ENCODE measurements at regions of chr10 and their contacts with region 1.

Region 1: DNA sequence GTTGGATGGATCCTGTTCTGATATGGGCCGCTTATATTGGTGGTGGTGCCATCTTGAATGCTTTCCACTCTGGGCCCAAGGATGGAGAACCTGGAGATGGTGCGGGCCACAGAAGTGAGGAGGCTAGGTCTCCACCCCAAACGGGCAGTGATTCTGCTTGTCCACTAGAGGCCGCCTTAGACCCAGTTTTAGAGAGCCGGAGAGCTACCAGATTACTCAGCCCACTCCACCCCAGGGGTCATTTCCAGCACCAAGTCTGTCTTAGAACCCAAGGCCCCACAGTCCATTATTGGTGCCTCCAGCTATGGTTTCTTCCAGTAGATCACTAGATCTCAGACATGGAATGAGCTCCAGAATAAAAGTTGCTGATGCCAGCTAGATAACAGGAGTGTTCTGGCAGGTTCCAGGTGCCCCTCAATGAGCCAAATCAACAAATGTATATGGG is 11.8 kb upstream of the CAMK2G start:
- DNase-seq: peak; percentile 74
- H3K4me3 Mint-ChIP-seq: no peak overlapping the region
- H3K27ac Mint-ChIP-seq: no peak overlapping the region
- H3K4me1 Mint-ChIP-seq: peaks cover 16% of the 10 kb centered on the region
- H3K27me3 Mint-ChIP-seq: no peaks in the 10 kb centered on the region

Region 2: DNA sequence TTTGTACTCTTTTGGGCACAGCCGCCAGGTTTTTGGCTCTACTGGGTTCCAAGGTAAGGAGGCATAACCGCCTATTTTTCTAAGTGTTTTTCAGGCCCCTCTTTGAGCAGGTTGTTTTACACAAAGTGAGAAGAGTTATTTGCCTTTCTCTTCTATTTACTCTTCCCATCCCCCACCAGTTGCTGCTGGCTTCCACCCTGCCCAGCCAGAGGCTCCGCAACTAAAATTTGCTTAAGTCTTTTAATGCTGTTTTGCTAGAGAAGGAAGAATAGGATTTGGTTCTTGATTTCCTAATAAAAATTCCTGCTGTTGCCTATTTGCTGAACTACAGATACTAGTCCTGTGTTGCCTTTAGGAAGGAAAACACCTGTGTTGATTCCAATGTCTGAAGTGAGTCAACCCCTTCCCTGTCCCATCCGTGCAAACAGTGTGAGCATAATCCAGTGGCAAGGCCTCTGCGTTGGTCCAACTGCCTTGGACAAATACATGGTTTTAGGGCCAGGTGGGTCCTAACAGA is 933.4 kb before region 1 on chr10:
- CTCF ChIA-PET with region 1: no interaction called
- POLR2A ChIA-PET with region 1: no interaction called
- DNase-seq: no peak
- H3K4me3 Mint-ChIP-seq: no peak overlapping the region
- H3K27ac Mint-ChIP-seq: no peak overlapping the region
- H3K4me1 Mint-ChIP-seq: no peaks in the 10 kb centered on the region
- H3K27me3 Mint-ChIP-seq: peaks cover 11% of the 10 kb centered on the region

Region 3: DNA sequence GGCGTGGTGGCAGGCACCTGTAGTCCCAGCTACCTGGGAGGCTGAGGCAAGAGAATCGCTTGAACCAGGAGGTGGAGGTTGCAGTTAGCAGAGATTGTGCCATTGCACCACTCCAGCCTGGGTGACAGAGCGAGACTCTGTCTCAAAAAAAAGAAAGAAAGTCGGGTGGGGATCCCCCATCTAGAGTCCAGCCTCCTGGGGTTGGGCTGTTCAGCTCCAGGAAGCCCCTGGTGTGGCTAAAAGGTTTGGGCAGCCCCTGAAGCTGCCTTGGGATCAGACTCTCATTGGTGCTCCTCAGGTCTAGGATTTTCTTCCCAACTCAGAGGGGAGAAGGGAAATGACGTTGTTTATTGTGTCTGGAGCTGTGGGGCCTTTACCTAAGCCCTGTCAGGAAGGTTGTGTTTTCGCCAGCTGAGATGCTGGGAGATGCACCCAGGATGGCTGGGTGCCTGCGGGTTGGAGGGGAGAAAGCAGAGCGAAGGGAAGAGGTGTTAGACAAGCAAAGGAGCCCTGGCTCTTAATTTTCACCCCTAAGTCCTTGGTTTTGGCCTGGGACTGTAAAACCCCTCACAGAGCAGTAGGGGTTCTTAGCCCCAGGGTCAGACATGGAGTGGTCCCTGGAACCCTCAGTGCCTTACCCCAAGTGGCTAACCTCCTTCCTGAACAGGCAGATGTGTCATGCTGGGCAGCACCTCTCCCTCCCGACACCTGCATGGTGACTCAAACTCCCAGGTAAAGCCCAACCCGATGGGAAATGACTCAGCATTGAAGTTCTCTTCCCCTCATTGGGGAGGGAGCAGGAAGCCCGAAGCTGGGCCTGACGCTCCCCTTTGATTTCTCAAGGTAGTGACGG is 45.9 kb after region 1 on chr10:
- CTCF ChIA-PET with region 1: interaction called, 415 read pairs
- POLR2A ChIA-PET with region 1: interaction called, 4 read pairs
- DNase-seq: peak; percentile 72
- H3K4me3 Mint-ChIP-seq: no peak overlapping the region
- H3K27ac Mint-ChIP-seq: peak overlapping the region; percentile 73
- H3K4me1 Mint-ChIP-seq: peaks cover 22% of the 10 kb centered on the region
- H3K27me3 Mint-ChIP-seq: peaks cover 13% of the 10 kb centered on the region

Region 4: DNA sequence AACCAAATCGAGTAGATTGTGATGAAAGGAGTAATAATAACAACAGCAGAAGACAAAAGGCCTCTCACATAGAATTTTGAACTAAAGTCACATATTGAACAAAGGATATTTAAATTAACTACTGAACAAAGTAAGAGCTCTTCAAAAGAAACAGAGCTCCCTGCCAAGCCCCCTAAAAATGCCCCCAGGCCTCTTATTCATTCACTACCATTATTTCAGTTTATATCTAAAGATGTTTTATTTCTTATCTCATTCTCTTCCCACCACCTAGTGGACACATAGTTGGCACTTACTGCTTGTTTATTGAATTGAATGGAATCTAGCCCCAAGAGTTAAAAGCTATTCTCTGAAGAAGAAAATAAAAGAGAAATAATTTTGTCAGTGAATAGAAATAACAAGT is 149.2 kb after region 1 on chr10:
- CTCF ChIA-PET with region 1: interaction called, 10 read pairs
- POLR2A ChIA-PET with region 1: no interaction called
- DNase-seq: no peak
- H3K4me3 Mint-ChIP-seq: no peak overlapping the region
- H3K27ac Mint-ChIP-seq: peak overlapping the region; percentile 19
- H3K4me1 Mint-ChIP-seq: peaks cover 45% of the 10 kb centered on the region
- H3K27me3 Mint-ChIP-seq: no peaks in the 10 kb centered on the region

Region 5: DNA sequence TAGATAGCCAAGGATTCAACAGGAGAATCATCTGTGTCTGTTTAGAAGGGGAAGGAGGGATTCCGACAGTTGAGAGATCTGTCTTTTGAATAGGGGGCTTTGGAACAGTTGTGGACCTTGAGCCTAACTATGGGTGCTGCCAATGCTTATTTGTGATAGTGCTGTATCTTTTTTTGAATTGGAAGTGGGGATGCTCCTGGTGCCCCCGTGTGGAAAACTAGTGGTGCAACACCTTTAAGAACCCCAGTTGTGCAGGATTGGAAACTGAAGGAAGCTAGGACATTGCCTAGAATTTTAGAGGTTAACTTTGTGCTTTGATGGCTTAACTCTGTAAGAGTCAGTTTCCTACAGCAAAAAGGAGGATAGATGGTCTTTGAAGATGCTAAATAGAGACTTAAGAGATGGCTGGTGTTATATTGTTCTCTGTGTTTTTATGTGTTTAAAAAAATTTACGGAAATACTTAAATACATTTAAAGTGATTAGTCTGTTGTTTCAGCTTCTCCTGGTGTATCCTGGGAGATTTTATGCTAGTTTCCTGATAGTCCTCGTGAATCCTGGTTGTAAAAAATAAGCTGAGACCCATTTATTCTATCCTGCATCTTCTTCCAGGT is 195.2 kb after region 1 on chr10:
- CTCF ChIA-PET with region 1: interaction called, 76 read pairs
- POLR2A ChIA-PET with region 1: interaction called, 3 read pairs
- DNase-seq: peak; percentile 45
- H3K4me3 Mint-ChIP-seq: no peak overlapping the region
- H3K27ac Mint-ChIP-seq: no peak overlapping the region
- H3K4me1 Mint-ChIP-seq: peaks cover 57% of the 10 kb centered on the region
- H3K27me3 Mint-ChIP-seq: no peaks in the 10 kb centered on the region

Region 6: GRCh38 chr10:74103560-74104248 is 217.6 kb after region 1 on chr10:
- CTCF ChIA-PET with region 1: interaction called, 18 read pairs
- POLR2A ChIA-PET with region 1: no interaction called
- DNase-seq: no peak
- H3K4me3 Mint-ChIP-seq: no peak overlapping the region
- H3K27ac Mint-ChIP-seq: no peak overlapping the region
- H3K4me1 Mint-ChIP-seq: peaks cover 7% of the 10 kb centered on the region
- H3K27me3 Mint-ChIP-seq: no peaks in the 10 kb centered on the region

Measured in activated CD4-positive, alpha-beta memory T cell treated with anti-CD3 and anti-CD28 coated beads, Interleukin-2, amount 10 ng/mL, durations not matched to agents 7 days and 5 days (primary cell).